HepG2 (cell line): ENCODE measurements at regions of chr22 and their contacts with region 1.

Region 1: GRCh38 chr22:25404928-25405816 is 159.3 kb upstream of the GRK3 start:
- DNase-seq: peak; percentile 13
- ATAC-seq: 0 out of 3 replicates have a peak, but pooled peaks have one; percentile 1
- H3K4me3 ChIP-seq: peak overlapping the region; percentile 77 to 84 (median 82)
- H3K27ac ChIP-seq: peak overlapping the region; percentile 89
- H3K4me1 ChIP-seq: peaks cover 59% of the 10 kb centered on the region
- H3K27me3 ChIP-seq: peaks cover 0 to 6% of the 10 kb centered on the region in 2 experiments; a peak in 2 of 5 replicates
- CTCF ChIP-seq: no peak
- EP300 ChIP-seq: no peak
- POLR2A ChIP-seq: peak in 1 of 2 experiments; percentile 60; a peak in 2 of 4 replicates
- RAD21 ChIP-seq: no peak

Region 2: DNA sequence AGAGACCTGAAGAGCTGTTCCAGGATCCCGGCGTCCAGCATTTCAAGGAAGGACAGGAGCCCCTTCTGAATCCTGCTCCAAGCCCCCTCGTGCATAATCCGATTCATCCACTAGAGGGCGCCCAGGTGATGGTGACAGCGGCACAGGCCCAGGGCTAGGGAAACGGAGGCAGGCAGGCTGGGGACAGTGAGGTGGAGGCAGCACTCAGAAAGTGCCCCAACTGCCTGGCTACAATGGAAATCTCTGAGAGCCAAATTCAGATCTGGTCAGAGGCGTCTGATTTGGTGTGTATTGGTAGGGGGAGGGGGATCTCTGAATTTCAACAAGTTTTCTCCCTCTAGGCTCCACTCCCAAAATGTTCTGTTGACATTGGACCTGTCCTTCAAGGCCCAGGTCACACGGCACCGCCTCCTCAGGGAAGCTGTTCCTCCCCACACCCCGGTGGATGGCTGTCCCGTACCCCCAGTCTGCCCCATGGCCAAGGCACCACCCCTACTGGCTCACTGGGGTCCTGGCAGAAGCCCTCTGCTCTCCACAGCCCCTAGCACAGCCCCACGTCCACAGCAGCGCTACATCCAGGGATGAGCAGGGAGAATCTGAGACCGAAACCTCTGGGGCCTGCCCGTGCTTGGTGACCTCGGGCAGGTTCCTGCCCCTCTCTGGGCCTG is 42.8 kb before region 1 on chr22:
- CTCF ChIA-PET with region 1: no interaction called
- POLR2A ChIA-PET with region 1: no interaction called
- in situ Hi-C with region 1: no loop called
- intact Hi-C with region 1: loop called (anchors 5 kb)
- DNase-seq: peak; percentile 35
- ATAC-seq: peak; percentile 72
- H3K4me3 ChIP-seq: no peak overlapping the region
- H3K27ac ChIP-seq: no peak overlapping the region
- H3K4me1 ChIP-seq: no peaks in the 10 kb centered on the region
- H3K27me3 ChIP-seq: no peaks in the 10 kb centered on the region
- CTCF ChIP-seq: peak; percentile 92
- EP300 ChIP-seq: no peak
- POLR2A ChIP-seq: no peak
- RAD21 ChIP-seq: peak; percentile 89

Region 3: GRCh38 chr22:25390297-25391240 is 14.6 kb before region 1 on chr22:
- CTCF ChIA-PET with region 1: no interaction called
- POLR2A ChIA-PET with region 1: interaction called, 6 read pairs
- in situ Hi-C with region 1: no loop called
- intact Hi-C with region 1: loop called (anchors 1 kb)
- DNase-seq: peak; percentile 59
- ATAC-seq: peak; percentile 86
- H3K4me3 ChIP-seq: peak overlapping the region in 1 of 3 experiments; percentile 47; a peak in 1 of 6 replicates
- H3K27ac ChIP-seq: peak overlapping the region; percentile 55
- H3K4me1 ChIP-seq: peaks cover 95% of the 10 kb centered on the region
- H3K27me3 ChIP-seq: no peaks in the 10 kb centered on the region
- CTCF ChIP-seq: peak; percentile 15; the same call in 1 of the 2 replicates
- EP300 ChIP-seq: peak in 1 of 2 experiments; percentile 60; a peak in 2 of 4 replicates
- POLR2A ChIP-seq: no peak
- RAD21 ChIP-seq: no peak

Region 4: DNA sequence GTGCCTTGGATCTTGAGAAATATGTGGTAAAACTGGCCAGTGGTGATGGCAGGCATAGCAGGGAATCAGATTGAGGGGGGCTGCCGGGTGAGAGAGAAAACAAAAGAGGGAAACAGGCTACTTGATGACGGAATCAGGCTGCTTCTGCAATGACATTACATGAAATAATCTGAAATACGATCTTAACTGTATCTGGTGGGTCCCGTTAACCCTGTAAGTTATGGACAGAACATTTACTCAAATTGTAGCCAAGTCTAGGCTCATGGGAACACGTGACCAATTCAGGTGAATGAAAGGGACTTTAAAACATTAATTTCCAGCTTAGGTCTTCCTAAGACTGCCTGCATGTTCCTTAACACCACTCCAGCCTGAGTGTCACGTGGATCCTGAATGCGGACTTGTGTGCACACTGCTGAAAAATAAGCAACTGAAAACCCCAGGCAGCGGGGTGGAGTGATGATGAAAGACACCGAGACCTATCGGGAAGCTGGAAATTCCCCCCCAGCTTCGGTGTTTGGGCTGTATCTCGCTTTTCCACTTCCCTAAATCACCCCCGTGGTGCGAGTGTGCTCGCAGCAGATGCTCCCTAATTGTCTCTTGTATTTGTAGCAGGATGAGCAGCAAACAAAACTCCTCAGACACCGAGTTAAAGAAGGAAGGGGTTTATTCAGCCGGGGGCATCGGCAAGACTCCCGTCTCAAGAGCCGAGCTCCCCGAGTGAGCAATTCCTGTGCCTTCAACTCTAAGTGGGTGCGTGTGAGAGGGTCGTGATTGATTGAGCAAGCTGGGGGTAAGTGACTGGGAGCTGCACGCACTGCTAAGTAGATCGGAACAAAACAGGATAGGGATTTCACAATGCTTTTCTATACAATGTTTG is 14.3 kb after region 1 on chr22:
- CTCF ChIA-PET with region 1: no interaction called
- POLR2A ChIA-PET with region 1: interaction called, 9 read pairs
- in situ Hi-C with region 1: no loop called
- intact Hi-C with region 1: loop called (anchors 1 kb)
- DNase-seq: peak; percentile 37
- ATAC-seq: peak; percentile 46
- H3K4me3 ChIP-seq: peak overlapping the region; percentile 40 to 62 (median 47)
- H3K27ac ChIP-seq: no peak overlapping the region
- H3K4me1 ChIP-seq: peaks cover 34% of the 10 kb centered on the region
- H3K27me3 ChIP-seq: peaks cover 5 to 24% of the 10 kb centered on the region in 2 experiments; a peak in 3 of 5 replicates
- CTCF ChIP-seq: no peak
- EP300 ChIP-seq: no peak
- POLR2A ChIP-seq: no peak
- RAD21 ChIP-seq: no peak

Region 5: DNA sequence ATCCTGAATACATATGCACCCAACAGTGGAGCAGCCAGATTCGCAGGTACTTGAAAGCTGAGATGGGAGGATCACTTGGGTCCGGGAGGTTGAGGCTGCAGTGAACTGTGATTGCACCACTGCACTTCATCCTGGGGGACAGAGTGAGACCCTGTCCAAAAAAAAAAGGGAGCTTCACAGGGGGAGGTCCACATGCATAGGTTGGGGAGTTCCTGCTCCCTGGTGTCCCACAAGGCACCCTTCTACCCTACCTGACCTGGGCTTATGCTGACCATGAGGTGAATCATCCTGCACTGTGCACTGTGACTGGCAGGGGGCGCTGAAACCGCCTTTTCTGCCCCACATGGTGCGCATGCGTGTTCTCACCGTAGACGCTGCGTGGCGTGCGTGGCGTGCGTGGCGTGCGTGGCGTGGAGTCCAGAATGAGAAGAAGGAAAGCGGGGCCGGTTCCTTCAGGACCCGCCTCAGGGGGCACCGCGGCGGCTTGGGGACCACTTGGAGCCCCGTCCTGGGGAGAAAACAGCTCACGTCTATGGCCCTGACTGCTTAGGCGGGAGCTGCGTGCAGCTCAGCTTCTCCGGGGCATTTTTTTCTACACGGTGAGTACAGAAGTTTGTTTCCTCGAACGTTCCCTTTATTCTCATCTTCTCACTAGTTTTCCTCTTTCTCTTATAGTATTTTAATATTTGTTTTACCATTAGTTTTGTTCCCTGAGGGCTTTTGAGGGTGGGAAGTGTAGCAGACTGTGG is 42.7 kb after region 1 on chr22:
- CTCF ChIA-PET with region 1: no interaction called
- POLR2A ChIA-PET with region 1: interaction called, 10 read pairs
- in situ Hi-C with region 1: no loop called
- intact Hi-C with region 1: no loop called
- DNase-seq: peak; percentile 83
- ATAC-seq: peak; percentile 94
- H3K4me3 ChIP-seq: peak overlapping the region; percentile 64 to 96 (median 91)
- H3K27ac ChIP-seq: peak overlapping the region; percentile 95
- H3K4me1 ChIP-seq: peaks cover 53% of the 10 kb centered on the region
- H3K27me3 ChIP-seq: no peaks in the 10 kb centered on the region; a peak in 1 of 5 replicates
- CTCF ChIP-seq: peak; percentile 98
- EP300 ChIP-seq: no peak
- POLR2A ChIP-seq: peak; percentile 78
- RAD21 ChIP-seq: 0 out of 2 replicates have a peak, but pooled peaks have one; percentile 25

Region 6: GRCh38 chr22:25475257-25476022 is 70.3 kb after region 1 on chr22:
- CTCF ChIA-PET with region 1: no interaction called
- POLR2A ChIA-PET with region 1: no interaction called
- in situ Hi-C with region 1: no loop called
- intact Hi-C with region 1: no loop called
- DNase-seq: no peak
- ATAC-seq: no peak
- H3K4me3 ChIP-seq: no peak overlapping the region
- H3K27ac ChIP-seq: no peak overlapping the region
- H3K4me1 ChIP-seq: no peaks in the 10 kb centered on the region
- H3K27me3 ChIP-seq: no peaks in the 10 kb centered on the region
- CTCF ChIP-seq: no peak
- EP300 ChIP-seq: no peak
- POLR2A ChIP-seq: no peak
- RAD21 ChIP-seq: no peak